ENCODE measurements at regions of chr19 and their contacts with region 1.

Region 1: GRCh38 chr19:39671738-39672363 is 16.1 kb downstream of the LGALS16 start:
- DNase-seq: no peak
- ATAC-seq: peak; percentile 80
- H3K4me3 ChIP-seq: no peak overlapping the region
- H3K27ac ChIP-seq: no peak overlapping the region
- H3K4me1 ChIP-seq: peaks cover 15% of the 10 kb centered on the region
- H3K27me3 ChIP-seq: no peaks in the 10 kb centered on the region
- CTCF ChIP-seq: peak; percentile 42 to 80 (median 66); a peak in 5 of 6 replicates
- EP300 ChIP-seq: no peak
- POLR2A ChIP-seq: no peak
- RAD21 ChIP-seq: peak; percentile 99

Region 2: GRCh38 chr19:39445265-39446111 is 226.4 kb before region 1 on chr19 and contains the start of gene SUPT5H:
- CTCF ChIA-PET with region 1: interaction called, 7 read pairs
- POLR2A ChIA-PET with region 1: no interaction called
- RAD21 ChIA-PET with region 1: no interaction called
- SMC1A ChIA-PET with region 1: interaction called, 3 read pairs
- in situ Hi-C with region 1: no loop called
- intact Hi-C with region 1: loop called (anchors 2 kb)
- DNase-seq: peak; percentile 97
- ATAC-seq: peak; percentile 90
- H3K4me3 ChIP-seq: peak within 1 kb of the TSS; percentile 87
- H3K27ac ChIP-seq: peak within 1 kb of the TSS; percentile 95
- H3K4me1 ChIP-seq: peaks cover 28% of the 10 kb centered on the region
- H3K27me3 ChIP-seq: no peaks in the 10 kb centered on the region
- CTCF ChIP-seq: no peak
- EP300 ChIP-seq: peak in 1 of 2 experiments; percentile 25; a peak in 1 of 4 replicates
- POLR2A ChIP-seq: peak; percentile 95
- RAD21 ChIP-seq: no peak
- polyA plus RNA-seq, gene SUPT5H: 27.2 to 75.0 TPM

Region 3: GRCh38 chr19:39515551-39516191 is 156.2 kb before region 1 on chr19:
- CTCF ChIA-PET with region 1: no interaction called
- POLR2A ChIA-PET with region 1: no interaction called
- RAD21 ChIA-PET with region 1: no interaction called
- SMC1A ChIA-PET with region 1: no interaction called
- in situ Hi-C with region 1: no loop called
- intact Hi-C with region 1: no loop called
- DNase-seq: no peak
- ATAC-seq: no peak
- H3K4me3 ChIP-seq: peak overlapping the region; percentile 36; the same call in 1 of the 2 replicates
- H3K27ac ChIP-seq: no peak overlapping the region
- H3K4me1 ChIP-seq: peaks cover 11% of the 10 kb centered on the region
- H3K27me3 ChIP-seq: peaks cover 9 to 22% of the 10 kb centered on the region in 2 experiments
- CTCF ChIP-seq: no peak
- EP300 ChIP-seq: no peak
- POLR2A ChIP-seq: no peak
- RAD21 ChIP-seq: no peak

Region 4: DNA sequence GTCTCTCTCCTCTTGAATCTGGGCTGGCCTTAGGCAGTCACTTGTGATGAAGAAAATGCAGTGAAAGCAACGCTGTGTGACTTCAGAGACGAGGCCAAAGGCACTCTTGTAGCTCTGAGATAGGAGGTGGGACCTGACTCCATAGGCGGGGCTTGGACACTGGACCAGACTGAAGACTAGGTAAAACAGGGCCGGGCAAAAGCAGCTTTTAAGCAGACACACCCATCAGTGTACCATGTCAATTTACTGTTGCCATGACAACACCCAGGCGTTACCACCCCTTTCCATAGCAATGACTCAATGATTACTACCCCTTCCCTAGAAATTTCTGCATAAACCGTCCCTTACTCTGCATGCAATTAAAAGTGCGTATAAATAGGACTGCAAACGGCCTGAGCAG is 125.3 kb before region 1 on chr19:
- CTCF ChIA-PET with region 1: interaction called, 248 read pairs
- POLR2A ChIA-PET with region 1: interaction called, 4 read pairs
- RAD21 ChIA-PET with region 1: interaction called, 105 read pairs
- SMC1A ChIA-PET with region 1: interaction called, 105 read pairs
- in situ Hi-C with region 1: loop called (anchors 5 kb)
- intact Hi-C with region 1: loop called (anchors 1 kb)
- DNase-seq: no peak
- ATAC-seq: no peak
- H3K4me3 ChIP-seq: no peak overlapping the region
- H3K27ac ChIP-seq: no peak overlapping the region
- H3K4me1 ChIP-seq: peaks cover 1% of the 10 kb centered on the region
- H3K27me3 ChIP-seq: no peaks in the 10 kb centered on the region; a peak in 1 of 4 replicates
- CTCF ChIP-seq: no peak
- EP300 ChIP-seq: no peak
- POLR2A ChIP-seq: no peak
- RAD21 ChIP-seq: no peak

Region 5: DNA sequence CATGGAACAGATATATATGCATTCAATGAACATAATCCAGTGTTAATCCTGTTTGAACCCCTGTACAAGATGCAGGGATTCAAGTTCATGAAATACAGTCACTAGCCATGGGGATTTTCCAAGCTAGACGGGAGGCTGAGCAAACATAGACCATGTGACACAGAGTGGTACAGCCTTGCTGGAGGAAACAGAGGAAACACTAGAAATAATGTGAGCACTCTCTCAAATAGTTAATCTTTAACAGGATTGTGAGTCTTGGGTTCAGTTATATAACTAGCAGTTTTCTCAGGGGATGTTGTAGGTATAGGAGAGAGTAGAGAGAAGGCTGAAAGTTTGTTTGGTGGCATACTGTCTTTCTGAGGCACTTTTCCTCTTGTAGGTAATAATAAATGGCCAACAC is 30.1 kb before region 1 on chr19:
- CTCF ChIA-PET with region 1: no interaction called
- POLR2A ChIA-PET with region 1: no interaction called
- RAD21 ChIA-PET with region 1: no interaction called
- SMC1A ChIA-PET with region 1: no interaction called
- in situ Hi-C with region 1: no loop called
- intact Hi-C with region 1: no loop called
- DNase-seq: no peak
- ATAC-seq: no peak; the same call in 2 of the 3 replicates
- H3K4me3 ChIP-seq: no peak overlapping the region
- H3K27ac ChIP-seq: no peak overlapping the region
- H3K4me1 ChIP-seq: no peaks in the 10 kb centered on the region
- H3K27me3 ChIP-seq: 0 out of 4 replicates have a peak, but pooled peaks cover 0 to 1% of the 10 kb centered on the region in 2 experiments
- CTCF ChIP-seq: no peak
- EP300 ChIP-seq: no peak
- POLR2A ChIP-seq: no peak
- RAD21 ChIP-seq: no peak

Region 6: DNA sequence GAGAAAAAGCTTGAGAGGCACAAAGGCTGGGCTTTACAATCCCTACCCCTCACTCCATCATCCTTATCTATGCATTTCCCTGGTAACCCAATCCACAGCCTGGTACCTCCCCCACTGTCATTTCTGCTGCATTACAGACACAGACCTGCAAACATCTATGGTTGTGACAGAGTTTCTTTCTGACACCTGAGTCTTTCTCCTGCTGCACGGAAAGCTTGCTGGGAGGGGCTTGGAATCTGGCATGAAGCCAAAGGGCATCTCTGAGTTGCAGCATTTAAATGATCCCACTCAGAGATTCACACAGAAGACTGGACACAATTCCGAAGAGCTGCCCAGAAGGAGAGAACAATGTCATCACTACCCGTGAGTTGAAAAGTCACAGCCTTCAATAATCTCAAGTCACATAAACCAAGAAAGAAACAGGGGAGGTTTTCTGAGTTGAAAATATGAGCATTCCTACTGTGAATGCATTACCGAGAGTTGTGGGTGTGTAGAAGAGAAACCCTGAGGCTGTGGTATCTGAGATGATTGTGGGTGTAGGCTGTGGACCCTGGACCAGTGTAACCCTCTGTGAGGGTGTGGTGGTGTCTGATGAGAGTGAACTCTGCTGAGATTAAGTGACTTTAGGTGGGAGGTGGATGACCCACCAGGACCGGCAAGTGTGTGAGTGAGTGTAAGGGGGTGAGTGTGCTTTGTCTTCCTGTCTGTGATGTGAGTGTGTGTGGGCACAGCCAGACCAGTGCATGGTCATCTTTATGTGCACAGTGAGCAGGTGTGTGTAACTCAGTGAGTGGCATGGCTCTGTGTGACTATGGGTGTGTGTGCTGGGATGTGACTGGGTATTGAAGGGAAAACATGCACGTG is 32.6 kb after region 1 on chr19 and contains the start of gene LGALS14:
- CTCF ChIA-PET with region 1: interaction called, 103 read pairs
- POLR2A ChIA-PET with region 1: interaction called, 8 read pairs
- RAD21 ChIA-PET with region 1: interaction called, 78 read pairs
- SMC1A ChIA-PET with region 1: interaction called, 113 read pairs
- in situ Hi-C with region 1: no loop called
- intact Hi-C with region 1: no loop called
- DNase-seq: no peak
- ATAC-seq: peak; percentile 68
- H3K4me3 ChIP-seq: peak within 1 kb of the TSS; percentile 58
- H3K27ac ChIP-seq: peak within 1 kb of the TSS; percentile 88
- H3K4me1 ChIP-seq: peaks cover 91% of the 10 kb centered on the region
- H3K27me3 ChIP-seq: no peaks in the 10 kb centered on the region
- CTCF ChIP-seq: no peak
- EP300 ChIP-seq: 0 out of 4 replicates have a peak, but pooled peaks of 1 of the 2 experiments have one; percentile 33
- POLR2A ChIP-seq: peak; percentile 62
- RAD21 ChIP-seq: no peak
- polyA plus RNA-seq, gene LGALS14: 21.0 to 34.6 TPM

Region 7: DNA sequence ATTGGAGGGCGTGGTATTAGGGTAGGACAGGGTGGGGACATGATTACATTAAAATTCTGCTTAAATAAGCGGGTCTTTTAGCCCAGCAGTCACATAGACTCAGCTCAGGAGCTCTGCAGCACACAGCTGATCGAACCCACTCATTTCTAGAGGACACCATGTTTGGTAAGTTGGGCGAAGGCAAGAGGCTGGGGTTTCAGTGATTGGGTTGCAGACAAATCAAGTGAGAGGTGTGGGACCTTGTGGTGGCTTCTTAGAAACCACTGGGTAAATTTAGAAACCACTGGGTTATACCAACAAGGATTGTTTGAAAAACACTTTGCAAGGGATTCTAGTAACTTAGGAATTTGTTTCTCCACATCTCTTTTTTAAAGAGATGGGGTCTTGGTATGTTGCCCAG is 106.9 kb after region 1 on chr19 and contains the start of gene LEUTX:
- CTCF ChIA-PET with region 1: interaction called, 11 read pairs
- POLR2A ChIA-PET with region 1: no interaction called
- RAD21 ChIA-PET with region 1: interaction called, 3 read pairs
- SMC1A ChIA-PET with region 1: interaction called, 9 read pairs
- in situ Hi-C with region 1: no loop called
- intact Hi-C with region 1: no loop called
- DNase-seq: peak; percentile 55
- ATAC-seq: peak; percentile 93
- H3K4me3 ChIP-seq: 0 out of 2 replicates have a peak within 1 kb of the TSS, but pooled peaks have one; percentile 0
- H3K27ac ChIP-seq: no peak within 1 kb of the TSS
- H3K4me1 ChIP-seq: peaks cover 17% of the 10 kb centered on the region
- H3K27me3 ChIP-seq: no peaks in the 10 kb centered on the region
- CTCF ChIP-seq: no peak
- EP300 ChIP-seq: no peak
- POLR2A ChIP-seq: no peak
- RAD21 ChIP-seq: no peak
- polyA plus RNA-seq, gene LEUTX: 0.29 to 0.40 TPM

Region 8: GRCh38 chr19:39818626-39819097 is 146.8 kb after region 1 on chr19:
- CTCF ChIA-PET with region 1: interaction called, 10 read pairs
- POLR2A ChIA-PET with region 1: no interaction called
- RAD21 ChIA-PET with region 1: interaction called, 4 read pairs
- SMC1A ChIA-PET with region 1: interaction called, 32 read pairs
- in situ Hi-C with region 1: no loop called
- intact Hi-C with region 1: no loop called
- DNase-seq: peak; percentile 77
- ATAC-seq: peak; percentile 96
- H3K4me3 ChIP-seq: no peak overlapping the region
- H3K27ac ChIP-seq: peak overlapping the region; percentile 47
- H3K4me1 ChIP-seq: peaks cover 36% of the 10 kb centered on the region
- H3K27me3 ChIP-seq: no peaks in the 10 kb centered on the region
- CTCF ChIP-seq: no peak
- EP300 ChIP-seq: peak; percentile 30 to 60; a peak in 2 of 4 replicates
- POLR2A ChIP-seq: peak; percentile 38; the same call in 1 of the 2 replicates
- RAD21 ChIP-seq: no peak